RWPE1 (cell line): ENCODE measurements at regions of chr14 and their contacts with region 1.

Region 1: DNA sequence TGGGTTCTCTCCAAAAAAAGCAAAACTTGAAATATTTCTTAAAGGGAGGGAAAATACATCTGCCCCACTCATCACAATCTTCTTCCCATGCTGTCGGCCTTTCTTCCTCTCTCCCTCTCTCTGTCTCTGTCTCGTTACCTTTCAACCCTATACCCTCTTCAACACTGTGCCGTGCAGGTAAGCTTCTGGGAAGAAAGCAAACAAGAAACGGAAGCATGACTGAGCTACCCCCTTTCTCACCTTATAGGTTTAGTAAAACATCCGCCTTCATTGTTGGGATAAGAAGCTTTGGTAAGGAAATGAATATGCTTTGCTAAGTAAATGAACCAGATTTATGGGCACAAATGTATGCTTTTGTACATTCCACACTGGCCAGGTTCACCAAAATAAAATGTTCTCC is 63.0 kb downstream of the TMEM30B start:
- DNase-seq: no peak
- H3K27ac ChIP-seq: no peak overlapping the region
- CTCF ChIP-seq: no peak

Region 2: DNA sequence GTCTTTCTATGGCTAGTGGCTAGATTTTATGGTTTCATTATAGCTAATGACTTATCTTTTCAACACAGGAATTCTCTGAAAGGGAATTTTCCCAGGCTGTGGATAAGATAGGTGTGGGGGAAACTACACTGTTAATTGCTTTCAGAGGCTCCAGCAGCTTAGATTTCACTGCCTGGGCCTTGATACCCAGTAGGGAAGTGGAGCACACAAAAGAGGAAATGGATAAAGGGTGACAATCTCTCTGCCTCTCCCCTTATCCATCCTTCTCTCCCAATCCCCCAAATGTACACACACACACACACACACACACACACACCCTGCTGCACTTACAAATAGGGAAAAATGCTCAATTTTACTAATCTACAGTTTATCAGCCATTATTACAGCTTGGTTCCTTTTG is 513.1 kb before region 1 on chr14:
- CTCF ChIA-PET with region 1: no interaction called
- POLR2A ChIA-PET with region 1: interaction called, 11 read pairs
- DNase-seq: no peak
- H3K27ac ChIP-seq: no peak overlapping the region
- CTCF ChIP-seq: no peak

Region 3: DNA sequence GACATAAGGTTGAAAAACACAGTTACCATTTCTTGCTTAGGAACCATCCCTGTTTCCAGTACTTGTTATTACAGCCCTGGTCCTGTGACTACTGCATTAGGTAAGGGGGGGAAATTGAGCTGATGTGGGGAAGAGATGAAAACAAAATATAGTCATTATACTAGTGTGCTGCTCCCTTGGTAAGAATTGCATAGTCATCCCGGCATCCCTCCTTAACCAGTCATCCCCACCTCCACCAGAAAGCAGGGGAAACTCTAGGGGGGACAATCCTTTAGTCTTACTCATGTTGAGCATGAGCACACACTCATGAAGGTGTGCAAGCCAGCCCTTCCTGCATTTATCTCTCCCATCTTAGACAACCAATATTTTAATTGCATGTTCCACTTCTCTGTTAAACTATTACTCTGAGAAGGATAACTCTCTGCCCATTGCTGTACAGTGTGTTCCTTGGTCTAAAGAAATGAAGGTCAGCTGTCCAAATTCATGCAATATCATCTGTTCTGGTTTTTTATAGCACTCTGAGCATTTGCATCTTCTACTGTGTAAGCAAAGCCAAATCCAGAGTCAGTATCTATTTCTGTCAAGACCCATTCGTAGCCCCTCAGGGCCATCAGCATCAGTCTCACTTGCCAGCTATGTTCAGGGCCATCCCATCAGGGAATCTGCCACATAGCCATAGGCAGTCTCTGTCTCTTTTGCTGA is 16.2 kb after region 1 on chr14:
- CTCF ChIA-PET with region 1: no interaction called
- POLR2A ChIA-PET with region 1: no interaction called
- DNase-seq: no peak
- H3K27ac ChIP-seq: no peak overlapping the region
- CTCF ChIP-seq: no peak